ENCODE measurements at regions of chr18 and their contacts with region 1.

Region 1: DNA sequence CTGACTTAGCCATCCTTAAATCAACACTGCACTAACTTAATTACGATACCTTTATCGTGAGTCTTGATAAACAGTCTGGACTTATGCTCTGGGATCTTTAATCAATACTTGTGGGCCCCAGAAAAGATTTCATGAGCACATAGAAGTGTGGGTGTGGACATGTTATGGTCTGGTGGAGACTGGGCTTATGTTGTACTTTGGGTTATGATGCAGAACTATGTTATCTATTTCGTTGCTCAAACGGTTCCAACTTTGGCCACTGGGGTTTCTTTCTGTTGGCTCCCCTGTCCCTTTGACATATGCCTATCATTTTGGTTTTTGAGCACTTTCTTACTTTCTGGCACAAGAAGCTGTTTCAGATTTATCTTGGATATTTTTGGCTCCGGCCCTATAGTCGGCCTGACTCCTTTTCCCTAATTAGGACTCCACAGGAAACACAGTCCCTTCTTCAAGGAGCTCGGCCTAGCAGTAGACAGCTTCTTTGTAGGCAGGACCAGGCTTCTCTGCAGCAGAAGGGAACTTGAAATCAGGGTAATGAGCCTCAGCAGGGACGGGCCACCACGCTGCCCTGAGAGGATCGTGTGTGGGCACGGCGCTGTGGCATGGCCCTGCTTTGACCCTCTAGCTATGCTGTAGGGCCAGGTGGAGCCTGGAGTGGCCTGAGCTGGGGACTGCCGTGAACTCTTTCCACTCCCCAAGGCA is 54.6 kb upstream of the TXNDC2 start:
- DNase-seq: no peak
- H3K4me3 ChIP-seq: no peak overlapping the region
- H3K27ac ChIP-seq: peak overlapping the region; percentile 37 to 68
- H3K4me1 ChIP-seq: peaks cover 7 to 17% of the 10 kb centered on the region in 2 donors
- H3K27me3 ChIP-seq: no peaks in the 10 kb centered on the region
- CTCF ChIP-seq: peak in 2 of 3 experiments; percentile 16 to 25

Region 2: DNA sequence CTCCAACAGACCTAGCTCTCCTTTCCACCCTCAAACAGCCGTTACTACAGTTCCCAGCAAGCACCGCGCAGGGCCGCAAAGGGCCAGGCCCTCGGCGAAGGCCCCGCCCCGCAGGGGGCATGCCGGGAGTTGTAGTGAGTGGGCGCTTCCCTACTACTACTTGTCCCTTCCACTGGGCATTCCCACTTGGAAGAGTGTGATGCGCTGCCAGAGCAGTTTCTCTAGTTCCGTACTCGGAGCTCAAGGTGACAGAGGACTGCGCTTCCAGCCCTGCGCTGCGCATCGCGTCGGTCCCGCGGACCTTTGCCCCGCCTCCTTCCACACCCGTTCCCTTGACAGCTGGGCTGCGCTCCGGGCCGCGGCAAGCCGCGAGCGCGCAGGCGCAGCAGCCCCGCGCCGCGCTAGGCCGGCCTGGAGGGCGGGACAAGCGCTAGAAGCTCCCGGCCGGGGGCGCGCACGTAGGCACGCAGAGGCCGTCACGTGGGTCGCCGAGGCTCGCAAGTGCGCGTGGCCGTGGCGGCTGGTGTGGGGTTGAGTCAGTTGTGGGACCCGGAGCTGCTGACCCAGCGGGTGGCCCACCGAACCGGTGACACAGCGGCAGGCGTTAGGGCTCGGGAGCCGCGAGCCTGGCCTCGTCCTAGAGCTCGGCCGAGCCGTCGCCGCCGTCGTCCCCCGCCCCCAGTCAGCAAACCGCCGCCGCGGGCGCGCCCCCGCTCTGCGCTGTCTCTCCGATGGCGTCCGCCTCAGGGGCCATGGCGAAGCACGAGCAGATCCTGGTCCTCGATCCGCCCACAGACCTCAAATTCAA is 82.5 kb after region 1 on chr18 and contains the start of gene VAPA:
- intact Hi-C with region 1: loop called (anchors 5 kb)
- DNase-seq: peak; percentile 85 to 97
- H3K4me3 ChIP-seq: peak within 1 kb of the TSS; percentile 96 to 97
- H3K27ac ChIP-seq: peak within 1 kb of the TSS; percentile 99 to 100
- H3K4me1 ChIP-seq: peaks cover 3 to 21% of the 10 kb centered on the region in 2 donors
- H3K27me3 ChIP-seq: no peaks in the 10 kb centered on the region
- CTCF ChIP-seq: no peak
- total RNA-seq, gene VAPA: 109 TPM

Region 3: DNA sequence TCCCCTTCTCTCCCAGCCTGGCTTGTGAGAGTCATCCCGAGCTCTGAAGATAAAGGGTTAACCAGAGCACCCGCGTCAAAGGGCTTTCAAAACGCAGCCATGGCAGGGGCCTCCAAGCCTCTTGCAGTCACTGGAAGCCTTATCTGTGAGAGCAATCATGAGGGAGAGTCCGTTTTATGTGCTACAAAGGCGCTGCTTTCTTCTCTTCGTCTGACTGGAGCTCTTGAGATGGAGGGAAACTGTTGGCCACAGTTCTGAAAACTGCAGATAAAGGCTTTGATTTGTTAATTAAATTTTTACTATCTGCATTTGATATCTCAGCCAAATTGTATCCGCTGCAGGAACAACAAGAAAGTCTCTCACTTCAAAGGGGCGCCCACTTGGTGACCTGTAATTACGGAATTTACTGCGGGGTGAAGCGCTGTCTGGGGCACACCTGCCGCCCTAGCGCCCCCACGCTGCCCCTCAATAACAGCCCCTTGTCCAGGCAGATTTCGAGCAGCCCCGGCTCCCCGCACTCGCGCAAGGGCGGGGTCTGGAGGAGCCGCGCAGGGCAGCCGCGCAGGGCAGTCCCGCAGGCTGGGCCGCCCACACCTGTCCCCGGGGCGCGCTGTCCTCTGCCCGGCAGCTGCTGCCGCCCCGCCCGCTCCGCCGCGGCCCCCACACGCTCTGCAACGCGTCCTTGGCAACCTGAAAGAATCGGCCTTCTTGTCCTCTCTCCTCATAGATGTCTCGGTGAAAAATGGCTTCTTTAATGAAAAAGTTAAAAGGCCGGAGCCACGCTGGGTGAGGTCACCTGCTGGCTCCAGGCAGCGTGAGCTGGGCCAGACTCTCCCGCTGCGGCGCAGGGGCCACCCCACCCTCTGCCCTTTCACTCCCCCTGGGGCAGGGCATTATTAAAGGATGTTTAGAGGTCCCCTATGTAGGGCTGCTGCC is 300.5 kb after region 1 on chr18:
- intact Hi-C with region 1: no loop called
- DNase-seq: no peak
- H3K4me3 ChIP-seq: peak overlapping the region; percentile 58 to 63
- H3K27ac ChIP-seq: no peak overlapping the region
- H3K4me1 ChIP-seq: peaks cover 6 to 9% of the 10 kb centered on the region in 2 donors
- H3K27me3 ChIP-seq: no peaks in the 10 kb centered on the region
- CTCF ChIP-seq: no peak

Measured in ascending aorta (tissue), 2 donors.